Activated CD4-positive, alpha-beta T cell treated with anti-CD3 and anti-CD28 coated beads, Interleukin-2, amount 10 ng/mL, durations not matched to agents 7 days and 5 days (primary cell): ENCODE measurements at regions of chr5 and their contacts with region 1.

Region 1: GRCh38 chr5:42908509-42909488 is 97.1 kb upstream of the SELENOP start:
- DNase-seq: peak; percentile 95
- H3K4me3 Mint-ChIP-seq: peak overlapping the region; percentile 74
- H3K27ac Mint-ChIP-seq: peak overlapping the region; percentile 11
- H3K4me1 Mint-ChIP-seq: peaks cover 23% of the 10 kb centered on the region
- H3K27me3 Mint-ChIP-seq: peaks cover 30% of the 10 kb centered on the region

Region 2: GRCh38 chr5:42919600-42919999 is 10.8 kb after region 1 on chr5:
- CTCF ChIA-PET with region 1: interaction called, 10 read pairs
- POLR2A ChIA-PET with region 1: no interaction called
- DNase-seq: no peak
- H3K4me3 Mint-ChIP-seq: no peak overlapping the region
- H3K27ac Mint-ChIP-seq: no peak overlapping the region
- H3K4me1 Mint-ChIP-seq: no peaks in the 10 kb centered on the region
- H3K27me3 Mint-ChIP-seq: no peaks in the 10 kb centered on the region

Region 3: DNA sequence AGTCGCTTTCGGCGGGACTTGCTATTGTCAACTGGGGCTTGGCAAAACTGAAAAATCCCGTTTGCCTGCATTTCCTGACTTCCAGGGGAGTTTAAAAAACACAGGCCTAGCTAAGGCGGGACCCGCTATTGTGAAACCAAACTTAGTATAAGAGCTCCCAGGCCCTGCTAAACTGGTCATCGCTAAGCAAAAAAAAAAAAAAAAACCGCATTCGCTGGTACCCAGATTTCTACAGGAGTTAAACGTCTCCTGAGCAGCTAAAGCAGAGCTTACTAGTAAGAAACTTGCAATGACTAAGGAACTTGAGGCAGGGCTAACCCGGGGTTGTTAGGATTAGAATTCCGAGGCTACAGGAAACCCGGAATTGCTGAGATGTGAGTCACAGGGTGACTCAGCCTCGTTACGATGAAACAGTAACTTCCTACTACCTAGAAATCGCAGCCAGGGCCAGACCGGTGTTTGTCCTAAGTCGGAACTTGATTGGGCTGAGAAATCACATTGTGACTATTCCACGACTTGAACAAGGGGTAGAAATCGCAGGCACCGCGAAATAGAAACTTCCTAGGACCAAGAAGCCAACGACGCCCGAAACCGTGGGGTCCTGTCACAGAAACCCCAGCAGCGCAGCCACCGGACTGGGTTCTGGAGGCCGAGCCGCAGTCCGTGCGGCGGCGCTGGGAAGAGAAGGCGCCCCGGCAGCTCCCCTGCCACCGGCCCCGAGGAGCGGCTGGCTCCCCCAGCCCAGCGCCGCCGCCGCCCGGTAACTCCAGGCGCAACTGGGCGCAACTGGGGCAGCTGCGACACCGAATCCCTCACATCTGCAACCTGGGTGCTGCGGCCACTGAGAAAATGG is 41.9 kb after region 1 on chr5:
- CTCF ChIA-PET with region 1: interaction called, 21 read pairs
- POLR2A ChIA-PET with region 1: interaction called, 5 read pairs
- DNase-seq: peak; percentile 65
- H3K4me3 Mint-ChIP-seq: peak overlapping the region; percentile 84
- H3K27ac Mint-ChIP-seq: peak overlapping the region; percentile 100
- H3K4me1 Mint-ChIP-seq: peaks cover 43% of the 10 kb centered on the region
- H3K27me3 Mint-ChIP-seq: no peaks in the 10 kb centered on the region